Activated CD4-positive, alpha-beta memory T cell treated with anti-CD3 and anti-CD28 coated beads for 36 hours (primary cell): ENCODE measurements at regions of chr6 and their contacts with region 1.

Region 1: DNA sequence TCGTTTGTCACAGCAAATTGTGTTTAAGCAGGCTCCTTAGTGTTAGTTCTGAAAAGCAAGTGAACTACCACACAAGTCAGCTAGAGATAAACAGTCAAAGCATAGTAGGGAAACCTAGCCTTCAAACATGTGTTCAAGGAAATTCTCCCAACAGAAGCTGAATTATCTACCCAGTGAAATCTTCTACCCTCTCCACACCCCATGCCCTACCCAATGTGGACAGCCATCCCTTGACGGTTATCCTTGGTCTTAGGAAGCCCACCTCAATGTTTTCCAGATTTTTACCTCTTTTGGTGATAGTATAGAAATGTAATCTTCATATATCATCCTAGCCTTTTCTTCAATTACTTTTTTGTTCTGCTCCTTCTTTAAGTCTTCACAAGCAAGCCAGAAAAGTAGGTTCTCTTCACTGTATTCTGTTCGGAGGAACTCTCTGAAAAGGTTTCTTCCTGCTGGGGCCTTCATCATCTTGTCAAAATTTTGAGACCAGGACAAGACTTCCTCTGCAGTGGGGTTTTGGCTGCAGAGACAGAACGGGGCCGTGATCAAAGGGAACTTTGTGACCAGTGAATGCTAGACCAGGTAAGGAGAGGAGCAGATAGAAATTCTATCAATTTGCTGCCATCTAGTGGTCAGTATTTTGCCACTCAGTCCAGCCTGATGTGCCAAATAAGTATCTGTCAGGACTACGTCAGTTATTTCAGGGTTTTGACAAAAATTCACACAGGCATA is 21.6 kb upstream of the MTRF1L start:
- DNase-seq: peak; percentile 41
- H3K4me3 Mint-ChIP-seq: no peak overlapping the region
- H3K27ac Mint-ChIP-seq: no peak overlapping the region
- H3K4me1 Mint-ChIP-seq: peaks cover 5% of the 10 kb centered on the region
- H3K27me3 Mint-ChIP-seq: peaks cover 14% of the 10 kb centered on the region

Region 2: GRCh38 chr6:152954443-152954842 is 69.7 kb before region 1 on chr6:
- CTCF ChIA-PET with region 1: interaction called, 8 read pairs
- POLR2A ChIA-PET with region 1: no interaction called
- intact Hi-C with region 1: loop called (anchors 1 kb)
- DNase-seq: no peak
- H3K4me3 Mint-ChIP-seq: no peak overlapping the region
- H3K27ac Mint-ChIP-seq: no peak overlapping the region
- H3K4me1 Mint-ChIP-seq: no peaks in the 10 kb centered on the region
- H3K27me3 Mint-ChIP-seq: peaks cover 11% of the 10 kb centered on the region

Region 3: GRCh38 chr6:153002607-153003365 is 21.4 kb before region 1 on chr6 and contains the start of gene MTRF1L:
- CTCF ChIA-PET with region 1: no interaction called
- POLR2A ChIA-PET with region 1: no interaction called
- intact Hi-C with region 1: loop called (anchors 1 kb)
- DNase-seq: peak; percentile 95
- H3K4me3 Mint-ChIP-seq: peak within 1 kb of the TSS; percentile 98
- H3K27ac Mint-ChIP-seq: peak within 1 kb of the TSS; percentile 98
- H3K4me1 Mint-ChIP-seq: peaks cover 30% of the 10 kb centered on the region
- H3K27me3 Mint-ChIP-seq: no peaks in the 10 kb centered on the region
- total RNA-seq, gene MTRF1L: 16.9 to 20.1 TPM

Region 4: DNA sequence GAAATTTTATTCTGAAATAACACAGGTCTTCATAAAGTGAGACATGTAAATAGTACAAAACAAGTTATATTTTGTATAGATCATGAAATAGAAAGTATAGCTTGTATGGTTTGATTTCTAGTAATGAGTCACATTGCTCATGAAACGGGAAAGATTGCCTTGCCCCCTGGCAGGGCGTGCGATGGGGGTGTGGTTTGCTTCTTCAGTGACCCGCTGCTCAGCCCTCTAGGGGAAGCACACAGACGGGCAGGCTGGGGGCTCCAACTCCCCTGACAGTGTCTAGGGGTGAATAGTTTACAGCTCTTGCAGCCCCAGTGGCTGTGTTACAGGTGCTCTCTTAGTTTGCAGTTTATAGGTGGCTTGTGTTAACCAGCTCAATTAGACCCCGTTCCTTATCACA is 277.5 kb after region 1 on chr6:
- CTCF ChIA-PET with region 1: no interaction called
- POLR2A ChIA-PET with region 1: no interaction called
- intact Hi-C with region 1: no loop called
- DNase-seq: no peak
- H3K4me3 Mint-ChIP-seq: no peak overlapping the region
- H3K27ac Mint-ChIP-seq: no peak overlapping the region
- H3K4me1 Mint-ChIP-seq: no peaks in the 10 kb centered on the region
- H3K27me3 Mint-ChIP-seq: peaks cover 2% of the 10 kb centered on the region